ENCODE measurements at regions of chr7 and their contacts with region 1.

Region 1: GRCh38 chr7:130242198-130243014 is 24.3 kb upstream of the CPA2 start:
- DNase-seq: peak in 4 of 5 donors; percentile 18 to 31 (median 26)
- H3K4me3 ChIP-seq: no peak overlapping the region
- H3K4me3 Mint-ChIP-seq: no peak overlapping the region
- H3K27ac ChIP-seq: no peak overlapping the region
- H3K27ac Mint-ChIP-seq: no peak overlapping the region
- H3K4me1 ChIP-seq: peaks cover 3% of the 10 kb centered on the region
- H3K4me1 Mint-ChIP-seq: peaks cover 0 to 9% (median 3%) of the 10 kb centered on the region in 4 donors
- H3K27me3 ChIP-seq: peaks cover 5% of the 10 kb centered on the region
- H3K27me3 Mint-ChIP-seq: peaks cover 4 to 14% of the 10 kb centered on the region in 2 donors

Region 2: DNA sequence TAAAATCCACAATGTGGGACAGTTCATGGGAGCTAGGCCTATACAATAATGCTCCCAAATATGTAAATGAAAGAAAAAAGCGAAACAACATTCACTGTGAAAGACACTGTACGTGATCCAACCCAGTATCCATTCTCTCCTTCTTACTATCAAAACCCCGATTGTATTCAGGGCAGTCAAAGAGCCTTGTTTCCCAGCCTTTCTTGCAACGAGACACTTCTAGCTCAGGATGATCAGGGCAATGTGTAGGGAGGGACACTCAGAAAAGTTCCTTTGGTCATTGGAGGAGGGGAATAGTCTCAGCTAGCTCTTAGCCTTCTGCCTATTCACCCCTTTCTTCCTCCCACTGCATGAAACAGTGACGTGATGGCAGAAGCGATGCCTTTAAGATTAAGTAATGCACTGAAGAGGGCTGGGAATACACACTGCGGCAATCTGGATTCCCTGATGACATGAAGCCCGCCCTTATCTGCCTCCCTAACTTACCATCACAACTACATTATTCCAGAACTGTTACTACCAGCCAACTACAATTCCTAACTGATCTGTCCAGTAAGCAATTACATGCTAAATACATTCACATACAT is 316.9 kb before region 1 on chr7:
- CTCF ChIA-PET with region 1: no interaction called
- POLR2A ChIA-PET with region 1: no interaction called
- intact Hi-C with region 1: no loop called
- DNase-seq: no peak
- H3K4me3 ChIP-seq: no peak overlapping the region
- H3K4me3 Mint-ChIP-seq: peak overlapping the region in 2 of 8 donors; percentile 13 to 33
- H3K27ac ChIP-seq: no peak overlapping the region
- H3K27ac Mint-ChIP-seq: peak overlapping the region in 4 of 7 donors; percentile 1 to 57 (median 22)
- H3K4me1 ChIP-seq: peaks cover 16% of the 10 kb centered on the region
- H3K4me1 Mint-ChIP-seq: peaks cover 25 to 49% (median 35%) of the 10 kb centered on the region in 4 donors
- H3K27me3 ChIP-seq: no peaks in the 10 kb centered on the region
- H3K27me3 Mint-ChIP-seq: no peaks in the 10 kb centered on the region

Region 3: GRCh38 chr7:130486114-130486958 is 243.9 kb after region 1 on chr7:
- CTCF ChIA-PET with region 1: no interaction called
- POLR2A ChIA-PET with region 1: no interaction called
- intact Hi-C with region 1: loop called (anchors 10 kb)
- DNase-seq: peak; percentile 47 to 61 (median 55)
- H3K4me3 ChIP-seq: peak overlapping the region; percentile 24 to 66
- H3K4me3 Mint-ChIP-seq: peak overlapping the region; percentile 84 to 89 (median 87)
- H3K27ac ChIP-seq: no peak overlapping the region
- H3K27ac Mint-ChIP-seq: peak overlapping the region in 2 of 7 donors; percentile 25 to 85
- H3K4me1 ChIP-seq: peaks cover 15% of the 10 kb centered on the region
- H3K4me1 Mint-ChIP-seq: peaks cover 17 to 26% (median 17%) of the 10 kb centered on the region in 4 donors
- H3K27me3 ChIP-seq: peaks cover 8% of the 10 kb centered on the region
- H3K27me3 Mint-ChIP-seq: peaks cover 30 to 41% of the 10 kb centered on the region in 2 donors

Region 4: DNA sequence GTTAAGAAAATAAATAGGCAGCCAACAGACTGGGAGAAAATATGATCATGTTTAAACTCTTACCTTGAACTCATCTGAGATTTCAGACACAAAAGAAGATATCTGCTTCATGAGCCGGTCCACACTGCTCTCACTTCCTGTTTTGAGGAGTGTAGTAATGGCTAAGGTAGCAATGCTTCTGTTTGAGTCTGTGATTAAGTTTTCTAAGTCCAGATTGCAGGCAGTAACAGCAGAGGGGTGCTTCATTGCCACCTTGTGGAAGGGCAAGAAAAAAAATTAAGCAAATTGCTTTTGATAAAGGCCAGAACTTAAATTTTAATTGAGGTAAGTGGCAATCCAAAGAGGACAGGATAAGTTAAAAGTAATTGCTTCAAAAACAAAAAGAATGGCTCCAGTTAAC is 318.6 kb after region 1 on chr7:
- CTCF ChIA-PET with region 1: no interaction called
- POLR2A ChIA-PET with region 1: no interaction called
- intact Hi-C with region 1: loop called (anchors 10 kb)
- DNase-seq: peak in 1 of 5 donors; percentile 2
- H3K4me3 ChIP-seq: no peak overlapping the region
- H3K4me3 Mint-ChIP-seq: no peak overlapping the region
- H3K27ac ChIP-seq: no peak overlapping the region
- H3K27ac Mint-ChIP-seq: peak overlapping the region in 1 of 7 donors; percentile 31
- H3K4me1 ChIP-seq: no peaks in the 10 kb centered on the region
- H3K4me1 Mint-ChIP-seq: peaks cover 0 to 4% (median 2%) of the 10 kb centered on the region in 4 donors
- H3K27me3 ChIP-seq: no peaks in the 10 kb centered on the region
- H3K27me3 Mint-ChIP-seq: no peaks in the 10 kb centered on the region

Region 5: GRCh38 chr7:130831817-130832481 is 589.5 kb after region 1 on chr7:
- CTCF ChIA-PET with region 1: interaction called, 14 read pairs
- POLR2A ChIA-PET with region 1: no interaction called
- intact Hi-C with region 1: no loop called
- DNase-seq: peak in 4 of 5 donors; percentile 16 to 24 (median 18)
- H3K4me3 ChIP-seq: no peak overlapping the region
- H3K4me3 Mint-ChIP-seq: no peak overlapping the region
- H3K27ac ChIP-seq: no peak overlapping the region
- H3K27ac Mint-ChIP-seq: no peak overlapping the region
- H3K4me1 ChIP-seq: no peaks in the 10 kb centered on the region
- H3K4me1 Mint-ChIP-seq: no peaks in the 10 kb centered on the region
- H3K27me3 ChIP-seq: no peaks in the 10 kb centered on the region
- H3K27me3 Mint-ChIP-seq: peaks cover 5 to 12% of the 10 kb centered on the region in 2 donors

Measured in CD4-positive, alpha-beta memory T cell (primary cell).